ENCODE measurements at regions of chr9 and their contacts with region 1.

Region 1: GRCh38 chr9:68584189-68585033 is 43.7 kb upstream of the TMEM252 start:
- DNase-seq: peak; percentile 59 to 90 (median 81)
- H3K4me3 ChIP-seq: peak overlapping the region in 12 of 59 donors; percentile 1 to 28 (median 18)
- H3K27ac ChIP-seq: no peak overlapping the region
- H3K27me3 ChIP-seq: peaks cover 0 to 5% (median 0%) of the 10 kb centered on the region in 45 donors
- CTCF ChIP-seq: peak; percentile 83 to 100 (median 99)

Region 2: DNA sequence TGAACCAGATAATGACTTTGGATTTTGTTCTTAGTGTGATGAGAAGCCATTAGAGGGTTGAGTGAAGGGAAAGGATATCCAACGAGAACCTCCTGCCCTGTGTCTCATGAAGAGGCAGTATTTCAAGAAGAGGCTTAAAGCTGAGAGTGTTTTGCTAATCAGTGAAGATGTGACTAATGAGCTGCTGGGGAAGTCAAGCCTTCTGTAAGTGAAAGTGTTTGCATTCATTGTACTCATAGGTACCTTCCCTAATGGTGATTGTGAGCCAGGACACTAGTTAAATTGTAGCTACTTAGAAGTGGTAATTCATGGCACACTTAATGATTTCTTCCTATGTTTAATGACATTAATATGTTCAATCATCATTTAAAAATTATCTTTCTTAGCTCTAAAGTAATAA is 144.3 kb after region 1 on chr9:
- intact Hi-C with region 1: no loop called
- DNase-seq: no peak
- H3K4me3 ChIP-seq: no peak overlapping the region
- H3K27ac ChIP-seq: no peak overlapping the region
- H3K27me3 ChIP-seq: no peaks in the 10 kb centered on the region
- CTCF ChIP-seq: no peak

Region 3: GRCh38 chr9:68844631-68845612 is 260.5 kb after region 1 on chr9:
- intact Hi-C with region 1: loop called in 1 of 2 experiments (anchors 10 kb)
- DNase-seq: peak in 5 of 10 donors; percentile 23 to 74 (median 47)
- H3K4me3 ChIP-seq: peak overlapping the region in 23 of 59 donors; percentile 2 to 39 (median 24)
- H3K27ac ChIP-seq: peak overlapping the region in 31 of 59 donors; percentile 0 to 71 (median 33)
- H3K27me3 ChIP-seq: no peaks in the 10 kb centered on the region
- CTCF ChIP-seq: peak; percentile 24 to 74 (median 56)

Region 4: GRCh38 chr9:68999393-69000105 is 415.1 kb after region 1 on chr9:
- intact Hi-C with region 1: loop called (anchors 2 to 5 kb)
- DNase-seq: peak in 8 of 10 donors; percentile 56 to 81 (median 70)
- H3K4me3 ChIP-seq: no peak overlapping the region
- H3K27ac ChIP-seq: peak overlapping the region in 16 of 59 donors; percentile 10 to 77 (median 52)
- H3K27me3 ChIP-seq: no peaks in the 10 kb centered on the region
- CTCF ChIP-seq: peak; percentile 57 to 96 (median 81)